AG04449 (cell line): ENCODE measurements at regions of chr5 and their contacts with region 1.

Region 1: DNA sequence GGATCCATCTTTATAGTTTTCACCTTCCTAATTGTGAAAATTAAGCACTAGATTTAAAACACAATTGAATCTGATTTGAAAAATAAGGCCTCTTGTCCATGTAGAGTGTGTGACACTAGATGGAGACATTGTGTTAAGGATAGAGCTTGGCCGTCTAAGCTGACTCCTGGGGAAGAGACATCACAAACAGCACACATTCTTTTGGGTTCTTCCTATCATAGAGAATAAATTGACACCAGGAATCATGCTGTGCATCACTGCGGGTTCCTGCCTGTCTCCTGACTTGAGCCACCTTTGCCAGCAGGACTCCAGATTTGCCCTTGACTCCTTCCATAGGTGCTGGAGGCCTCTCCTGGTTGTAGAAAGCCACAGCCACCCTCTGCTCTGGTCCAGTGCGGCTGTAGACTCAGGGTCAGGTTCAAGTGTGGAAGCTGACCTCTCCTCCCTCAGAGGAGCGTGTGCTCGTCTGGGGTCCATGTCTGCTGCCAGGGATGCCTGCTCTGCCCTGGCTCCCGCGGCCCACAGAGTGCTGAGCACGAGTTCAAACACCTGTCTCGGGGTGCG is 11.2 kb downstream of the ROPN1L start:
- DNase-seq: peak; percentile 65
- H3K4me3 ChIP-seq: no peak overlapping the region
- CTCF ChIP-seq: peak; percentile 68

Region 2: GRCh38 chr5:10427978-10428377 is 24.9 kb before region 1 on chr5:
- CTCF ChIA-PET with region 1: no interaction called
- POLR2A ChIA-PET with region 1: no interaction called
- DNase-seq: no peak
- H3K4me3 ChIP-seq: no peak overlapping the region
- CTCF ChIP-seq: no peak

Region 3: DNA sequence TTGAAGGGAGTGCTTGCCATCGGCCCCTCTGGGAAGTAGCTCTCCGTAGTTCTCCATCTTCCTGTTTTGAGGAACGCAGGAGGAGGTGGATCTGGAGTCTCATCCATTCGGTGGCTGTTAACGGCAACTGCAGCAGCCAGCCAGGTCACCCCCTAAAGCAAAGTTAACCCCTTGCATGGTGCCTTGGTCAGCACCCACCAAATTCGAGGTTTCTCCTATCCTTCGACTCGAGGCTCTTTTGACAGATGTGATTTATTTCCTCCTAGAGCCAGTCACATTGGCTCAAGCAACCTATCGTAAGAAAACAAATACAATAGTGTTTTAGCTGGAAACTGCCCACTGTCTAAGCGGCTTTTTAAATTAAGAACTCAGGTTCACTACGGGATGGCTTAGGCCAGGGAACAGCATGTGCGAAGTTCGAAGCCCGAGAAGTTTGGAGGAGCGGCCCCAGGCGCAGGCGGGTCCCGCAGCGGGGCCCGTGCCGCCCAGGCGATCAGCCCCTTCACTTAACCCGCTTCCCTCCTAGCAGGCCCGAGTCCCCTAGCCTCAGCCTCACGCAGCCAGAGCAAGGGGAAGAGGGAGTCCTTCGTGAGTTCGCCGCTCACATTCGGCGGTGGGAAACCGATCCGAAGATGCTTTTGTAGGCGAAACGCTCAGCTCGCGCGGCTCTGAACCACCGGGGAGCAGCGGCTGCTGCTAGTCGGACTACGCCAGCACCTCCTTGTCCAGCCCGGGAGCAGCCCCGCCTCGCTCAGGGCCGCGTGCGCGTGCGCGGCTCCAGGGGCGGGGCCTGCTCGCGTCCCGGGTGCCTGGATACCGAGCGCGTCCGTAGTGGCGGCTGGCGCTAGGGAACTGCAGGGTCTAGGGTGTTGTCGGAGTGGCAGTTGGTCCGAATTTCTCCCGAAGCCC is 11.5 kb before region 1 on chr5 and contains the start of gene ROPN1L:
- CTCF ChIA-PET with region 1: interaction called, 40 read pairs
- POLR2A ChIA-PET with region 1: interaction called, 3 read pairs
- DNase-seq: no peak
- H3K4me3 ChIP-seq: peak within 1 kb of the TSS; percentile 72
- CTCF ChIP-seq: no peak

Region 4: DNA sequence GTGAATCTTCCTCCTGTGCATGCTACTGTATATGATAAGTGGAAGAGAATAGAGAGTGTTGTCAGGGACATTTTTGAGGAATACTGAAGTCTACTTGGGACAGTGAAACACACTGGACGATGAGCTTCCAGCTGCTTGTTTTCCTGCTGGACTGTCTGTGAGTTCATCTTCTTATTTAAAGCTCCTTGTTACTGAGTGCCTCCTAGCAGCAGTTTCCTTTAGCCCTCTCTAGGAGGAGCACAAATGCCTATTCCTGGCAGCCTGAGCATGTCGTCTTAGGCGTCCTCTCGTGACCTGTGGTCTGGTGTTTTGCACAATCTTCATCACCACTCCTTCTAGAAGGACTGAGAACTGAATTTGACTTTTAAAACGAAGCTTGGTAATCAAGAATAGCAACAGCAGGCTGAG is 154.8 kb after region 1 on chr5:
- CTCF ChIA-PET with region 1: interaction called, 27 read pairs
- POLR2A ChIA-PET with region 1: no interaction called
- DNase-seq: no peak
- H3K4me3 ChIP-seq: no peak overlapping the region
- CTCF ChIP-seq: no peak

Region 5: GRCh38 chr5:10627160-10627701 is 174.4 kb after region 1 on chr5:
- CTCF ChIA-PET with region 1: interaction called, 256 read pairs
- POLR2A ChIA-PET with region 1: interaction called, 3 read pairs
- DNase-seq: no peak
- H3K4me3 ChIP-seq: peak overlapping the region; percentile 45
- CTCF ChIP-seq: no peak

Region 6: GRCh38 chr5:10695055-10695649 is 242.3 kb after region 1 on chr5:
- CTCF ChIA-PET with region 1: interaction called, 97 read pairs
- POLR2A ChIA-PET with region 1: no interaction called
- DNase-seq: no peak
- H3K4me3 ChIP-seq: no peak overlapping the region
- CTCF ChIP-seq: peak; percentile 82

Region 7: GRCh38 chr5:12023614-12024241 is 1570.9 kb after region 1 on chr5:
- CTCF ChIA-PET with region 1: interaction called, 11 read pairs
- POLR2A ChIA-PET with region 1: no interaction called
- DNase-seq: no peak
- H3K4me3 ChIP-seq: no peak overlapping the region
- CTCF ChIP-seq: peak; percentile 19